ENCODE measurements at regions of chr7 and their contacts with region 1.

Region 1: DNA sequence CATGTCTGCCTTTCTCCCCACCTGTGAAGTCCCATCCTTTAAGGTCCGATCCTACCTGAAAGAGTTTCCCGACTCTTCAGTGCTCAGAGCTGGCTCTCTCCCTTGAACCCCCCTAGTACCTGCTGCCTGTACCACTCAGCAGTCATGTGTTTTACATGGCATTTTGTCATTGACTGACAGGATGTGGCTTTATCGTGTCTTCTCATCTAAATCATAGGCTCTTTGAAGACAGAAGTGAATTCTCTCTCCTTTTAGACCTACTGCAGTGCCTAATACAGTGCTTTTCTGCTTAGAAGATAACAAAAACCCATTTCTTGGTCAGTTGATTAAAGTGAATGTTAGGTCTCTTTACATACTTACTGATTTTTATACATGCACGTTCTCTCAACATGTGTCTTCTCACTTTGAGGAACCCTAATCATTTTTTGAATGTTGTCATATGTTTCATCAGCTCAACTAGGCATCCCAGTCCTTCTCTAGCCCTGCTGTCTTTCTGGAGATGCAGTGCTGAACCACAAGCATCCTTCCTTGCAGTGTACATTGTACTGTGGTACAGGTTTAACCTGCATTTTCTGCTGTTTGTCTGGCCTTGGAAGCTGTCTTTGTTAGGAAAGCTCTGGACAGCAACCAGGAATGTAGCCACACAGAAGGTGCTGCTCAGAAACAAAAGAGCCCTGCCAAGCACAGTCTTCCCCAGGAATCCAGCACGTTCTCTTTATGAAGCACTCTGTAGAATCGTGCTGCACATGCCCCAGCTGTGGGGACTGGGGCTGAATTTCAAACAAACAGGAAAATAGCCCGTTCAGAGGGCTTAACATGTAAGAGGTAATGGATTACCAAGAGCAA is 28.1 kb upstream of the LRRC4 start:
- DNase-seq: no peak
- ATAC-seq: no peak
- H3K4me3 ChIP-seq: no peak overlapping the region
- H3K27ac ChIP-seq: no peak overlapping the region
- H3K4me1 ChIP-seq: no peaks in the 10 kb centered on the region
- H3K27me3 ChIP-seq: no peaks in the 10 kb centered on the region
- CTCF ChIP-seq: no peak
- EP300 ChIP-seq: no peak
- POLR2A ChIP-seq: no peak
- RAD21 ChIP-seq: no peak

Region 2: DNA sequence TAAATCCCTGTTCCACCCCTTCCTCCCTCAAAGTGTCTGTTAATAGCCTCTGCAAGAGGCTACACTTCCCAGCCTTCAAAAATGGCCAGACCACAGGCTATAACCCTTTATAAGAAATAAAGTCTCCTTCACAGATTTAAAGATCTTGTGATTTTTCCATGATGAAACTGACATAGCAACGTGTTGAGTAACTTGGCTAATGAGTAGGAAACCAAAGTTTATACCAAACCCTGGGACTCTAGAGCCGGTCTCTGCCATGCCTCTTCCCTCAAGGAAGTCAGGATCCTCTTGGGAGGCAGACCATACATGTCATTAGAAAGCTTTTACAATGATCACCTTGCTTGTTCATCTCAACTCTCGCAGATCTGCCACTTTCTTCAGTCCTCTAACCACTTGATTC is 851.0 kb before region 1 on chr7:
- CTCF ChIA-PET with region 1: no interaction called
- POLR2A ChIA-PET with region 1: no interaction called
- in situ Hi-C with region 1: no loop called
- intact Hi-C with region 1: no loop called
- DNase-seq: no peak
- ATAC-seq: no peak
- H3K4me3 ChIP-seq: no peak overlapping the region
- H3K27ac ChIP-seq: no peak overlapping the region
- H3K4me1 ChIP-seq: no peaks in the 10 kb centered on the region
- H3K27me3 ChIP-seq: no peaks in the 10 kb centered on the region
- CTCF ChIP-seq: no peak
- EP300 ChIP-seq: no peak
- POLR2A ChIP-seq: no peak
- RAD21 ChIP-seq: no peak

Region 3: GRCh38 chr7:128076796-128077271 is 17.5 kb after region 1 on chr7:
- CTCF ChIA-PET with region 1: no interaction called
- POLR2A ChIA-PET with region 1: interaction called, 4 read pairs
- in situ Hi-C with region 1: no loop called
- intact Hi-C with region 1: loop called (anchors 1 kb)
- DNase-seq: no peak
- ATAC-seq: no peak
- H3K4me3 ChIP-seq: no peak overlapping the region
- H3K27ac ChIP-seq: no peak overlapping the region
- H3K4me1 ChIP-seq: peaks cover 0 to 12% of the 10 kb centered on the region in 2 experiments; a peak in 2 of 5 replicates
- H3K27me3 ChIP-seq: no peaks in the 10 kb centered on the region
- CTCF ChIP-seq: no peak
- EP300 ChIP-seq: no peak
- POLR2A ChIP-seq: no peak
- RAD21 ChIP-seq: no peak

Measured in K562 (cell line).